ENCODE measurements at regions of chr1 and their contacts with region 1.

Region 1: GRCh38 chr1:26321315-26322041 is 3.7 kb downstream of the CD52 start:
- DNase-seq: peak; percentile 91
- H3K4me3 ChIP-seq: peak overlapping the region; percentile 93
- H3K27ac ChIP-seq: peak overlapping the region; percentile 91
- H3K4me1 ChIP-seq: peaks cover 49% of the 10 kb centered on the region
- CTCF ChIP-seq: peak; percentile 96

Region 2: GRCh38 chr1:26306290-26307229 is 14.9 kb before region 1 on chr1 and contains the start of gene UBXN11:
- CTCF ChIA-PET with region 1: interaction called, 7 read pairs
- POLR2A ChIA-PET with region 1: interaction called, 72 read pairs
- intact Hi-C with region 1: no loop called
- DNase-seq: peak; percentile 98
- H3K4me3 ChIP-seq: peak within 1 kb of the TSS; percentile 95
- H3K27ac ChIP-seq: peak within 1 kb of the TSS; percentile 98
- H3K4me1 ChIP-seq: peaks cover 67% of the 10 kb centered on the region
- CTCF ChIP-seq: no peak
- total RNA-seq, gene UBXN11: 74.2 and 75.8 TPM in 2 replicates

Region 3: GRCh38 chr1:26363549-26364448 is 42.3 kb after region 1 on chr1:
- CTCF ChIA-PET with region 1: interaction called, 3 read pairs
- POLR2A ChIA-PET with region 1: interaction called, 3 read pairs
- intact Hi-C with region 1: loop called (anchors 2 kb)
- DNase-seq: peak; percentile 92
- H3K4me3 ChIP-seq: no peak overlapping the region
- H3K27ac ChIP-seq: no peak overlapping the region
- H3K4me1 ChIP-seq: peaks cover 9% of the 10 kb centered on the region
- CTCF ChIP-seq: peak; percentile 99

Region 4: DNA sequence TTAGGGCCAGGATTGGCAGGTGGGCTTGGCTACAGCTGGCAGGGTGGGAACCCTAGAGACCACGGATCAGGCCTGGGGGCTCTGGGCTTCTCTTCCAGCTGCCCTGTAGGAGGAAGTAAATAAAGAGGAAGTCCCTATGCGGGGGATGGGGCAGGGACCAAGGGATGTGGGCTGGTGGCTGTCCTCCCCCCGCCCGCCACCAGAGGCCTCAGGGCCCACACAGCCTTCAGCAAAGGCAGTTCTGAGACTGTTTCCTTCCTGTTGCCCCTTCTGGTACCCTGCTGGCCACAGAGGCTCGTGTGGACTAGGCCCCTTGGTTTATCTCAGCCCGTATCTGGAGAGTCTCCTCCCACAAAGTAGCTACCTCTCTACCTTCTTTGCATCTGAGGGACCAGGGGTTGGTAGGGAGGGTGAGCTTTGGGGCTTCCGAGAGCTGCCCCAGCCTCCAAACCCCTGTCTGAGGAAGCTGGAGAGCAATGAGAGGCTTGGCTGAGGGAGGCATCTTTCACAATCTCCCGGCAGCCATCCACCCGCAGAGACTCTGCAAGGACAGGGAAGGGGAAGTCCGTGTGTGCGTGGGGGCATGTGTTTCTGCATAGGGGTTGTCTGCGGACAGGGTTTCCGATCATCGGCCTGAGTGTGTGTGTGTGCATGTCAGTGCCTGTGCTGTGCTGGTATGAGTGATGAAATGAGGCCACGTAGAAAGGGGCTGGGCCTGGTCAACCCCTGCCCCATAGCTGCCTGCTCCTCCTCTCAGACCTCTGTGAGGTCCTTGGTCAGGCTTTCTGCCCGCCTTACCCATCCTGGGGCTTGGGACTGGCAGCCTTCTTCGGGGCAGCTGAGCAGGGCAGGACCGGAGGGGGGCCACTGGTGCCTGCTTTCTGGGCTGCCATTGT is 220.6 kb after region 1 on chr1:
- CTCF ChIA-PET with region 1: no interaction called
- POLR2A ChIA-PET with region 1: no interaction called
- intact Hi-C with region 1: loop called (anchors 10 kb)
- DNase-seq: peak; percentile 95
- H3K4me3 ChIP-seq: peak overlapping the region; percentile 64
- H3K27ac ChIP-seq: peak overlapping the region; percentile 97
- H3K4me1 ChIP-seq: peaks cover 97% of the 10 kb centered on the region
- CTCF ChIP-seq: peak; percentile 72

Measured in OCI-LY7 (cell line).